Ascending aorta (tissue), 2 donors: ENCODE measurements at regions of chr15 and their contacts with region 1.

Region 1: GRCh38 chr15:101294731-101295606 is at the start of gene SNRPA1:
- DNase-seq: peak; percentile 87 to 99
- H3K4me3 ChIP-seq: peak within 1 kb of the TSS; percentile 65 to 100
- H3K27ac ChIP-seq: peak within 1 kb of the TSS; percentile 95 to 98
- H3K4me1 ChIP-seq: peaks cover 3 to 13% of the 10 kb centered on the region in 2 donors
- H3K27me3 ChIP-seq: no peaks in the 10 kb centered on the region
- CTCF ChIP-seq: no peak
- total RNA-seq, gene SNRPA1: 17.8 TPM

Region 2: GRCh38 chr15:101167753-101168463 is 127.1 kb before region 1 on chr15:
- intact Hi-C with region 1: loop called (anchors 1 kb)
- DNase-seq: peak; percentile 69 to 92
- H3K4me3 ChIP-seq: peak overlapping the region; percentile 13 to 37
- H3K27ac ChIP-seq: peak overlapping the region; percentile 94
- H3K4me1 ChIP-seq: peaks cover 23 to 36% of the 10 kb centered on the region in 2 donors
- H3K27me3 ChIP-seq: no peaks in the 10 kb centered on the region
- CTCF ChIP-seq: peak in 1 of 3 experiments; percentile 29

Region 3: GRCh38 chr15:101188637-101189408 is 106.1 kb before region 1 on chr15:
- intact Hi-C with region 1: no loop called
- DNase-seq: peak in 1 of 2 donors; percentile 69
- H3K4me3 ChIP-seq: peak overlapping the region; percentile 42 to 64
- H3K27ac ChIP-seq: peak overlapping the region; percentile 82 to 83
- H3K4me1 ChIP-seq: peaks cover 0 to 58% of the 10 kb centered on the region in 2 donors
- H3K27me3 ChIP-seq: no peaks in the 10 kb centered on the region
- CTCF ChIP-seq: no peak

Region 4: DNA sequence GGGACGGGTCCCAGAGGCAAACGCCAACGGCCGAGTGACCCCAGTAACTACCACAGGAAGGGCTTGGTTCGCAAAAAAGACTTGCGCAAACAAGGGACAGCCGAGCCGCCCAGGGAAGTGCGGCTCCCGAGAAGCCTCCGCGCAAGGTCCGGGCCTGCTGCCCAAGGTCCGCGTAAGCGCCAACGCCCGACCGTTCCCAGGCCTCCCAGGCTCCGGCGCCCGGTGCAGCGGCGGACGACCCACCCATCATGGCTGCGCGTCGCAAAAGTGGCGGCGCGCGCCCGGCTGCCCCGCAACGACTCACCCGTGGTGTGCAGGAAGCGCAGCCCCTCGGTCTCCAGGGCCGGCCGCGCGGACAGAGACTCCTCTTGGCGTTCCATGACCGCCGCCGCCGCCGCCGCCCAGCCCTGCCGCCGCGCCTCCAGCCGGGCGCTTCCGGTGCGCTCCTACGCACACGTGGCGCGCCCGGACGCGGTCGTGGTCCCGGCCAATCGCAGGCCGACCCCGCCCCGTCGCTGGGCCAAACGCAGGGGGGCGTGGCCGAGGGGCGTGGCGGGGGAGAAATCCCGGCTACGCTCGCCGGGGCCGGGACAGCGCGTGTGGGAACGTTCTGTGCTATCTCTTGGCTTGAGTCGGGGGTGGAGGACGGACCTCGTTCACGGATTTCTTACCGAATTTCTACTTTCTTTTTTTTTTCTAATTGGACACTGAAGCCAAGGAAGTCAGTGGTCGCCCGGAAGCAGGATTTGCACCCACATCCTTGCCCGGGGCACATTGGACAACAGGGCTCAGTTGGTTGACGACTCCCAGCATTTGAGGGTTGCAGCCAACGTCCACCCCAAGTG is 17.7 kb before region 1 on chr15 and contains the start of gene SELENOS:
- intact Hi-C with region 1: loop called (anchors 1 kb)
- DNase-seq: peak; percentile 52 to 93
- H3K4me3 ChIP-seq: peak within 1 kb of the TSS; percentile 67 to 90
- H3K27ac ChIP-seq: peak within 1 kb of the TSS; percentile 89 to 93
- H3K4me1 ChIP-seq: peaks cover 0 to 14% of the 10 kb centered on the region in 2 donors
- H3K27me3 ChIP-seq: no peaks in the 10 kb centered on the region
- CTCF ChIP-seq: no peak
- total RNA-seq, gene SELENOS: 32.0 TPM

Region 5: GRCh38 chr15:101652098-101652782 is 357.3 kb after region 1 on chr15 and contains the start of gene TM2D3:
- intact Hi-C with region 1: loop called (anchors 2 kb)
- DNase-seq: peak; percentile 63 to 95
- H3K4me3 ChIP-seq: peak within 1 kb of the TSS; percentile 97 to 98
- H3K27ac ChIP-seq: peak within 1 kb of the TSS; percentile 99 to 100
- H3K4me1 ChIP-seq: peaks cover 0 to 27% of the 10 kb centered on the region in 2 donors
- H3K27me3 ChIP-seq: no peaks in the 10 kb centered on the region
- CTCF ChIP-seq: peak; percentile 74 to 95 (median 84)
- total RNA-seq, gene TM2D3: 105 TPM

Region 6: DNA sequence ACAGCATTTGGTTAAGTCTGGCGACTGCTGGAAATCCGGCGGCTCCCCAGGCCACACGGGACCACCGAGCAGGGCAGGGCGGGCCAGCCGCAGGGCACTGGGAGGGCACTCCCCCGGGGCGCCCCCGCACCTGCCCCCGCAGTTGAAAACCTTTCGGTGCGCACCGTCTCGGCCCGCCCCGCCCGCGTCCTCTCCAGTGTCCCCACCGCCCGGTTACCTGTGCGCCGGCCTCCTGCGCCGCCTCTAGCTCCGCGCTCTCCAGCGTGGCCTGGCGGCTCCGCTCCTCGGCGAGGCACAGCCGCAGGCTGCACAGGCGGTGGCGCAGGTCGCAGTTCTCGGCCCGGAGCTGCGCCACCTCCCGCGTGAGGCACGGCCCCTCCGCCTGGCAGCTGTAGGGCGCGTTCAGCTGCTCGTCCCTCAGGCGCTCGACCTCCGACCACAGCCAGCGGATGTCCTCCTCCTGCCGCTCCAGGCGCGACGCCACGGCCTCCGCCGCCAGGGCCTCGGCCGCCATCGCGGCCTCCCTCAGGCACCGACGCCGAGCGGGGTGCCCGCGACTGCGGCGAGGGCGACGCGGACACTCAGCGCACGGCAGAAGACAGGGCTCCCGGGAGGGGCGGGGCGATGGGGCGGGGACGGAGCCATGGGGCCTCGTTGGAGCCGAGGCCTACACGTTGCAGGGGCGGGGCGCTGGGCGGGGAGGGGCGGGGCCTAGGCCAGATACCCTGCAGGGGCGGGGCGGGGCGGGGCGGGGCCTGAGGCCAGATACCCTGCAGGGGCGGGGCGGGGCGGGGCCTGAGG is 429.1 kb after region 1 on chr15 and contains the start of gene TARS3:
- intact Hi-C with region 1: loop called (anchors 5 kb)
- DNase-seq: peak; percentile 83 to 97
- H3K4me3 ChIP-seq: peak within 1 kb of the TSS; percentile 76 to 82
- H3K27ac ChIP-seq: peak within 1 kb of the TSS; percentile 91 to 92
- H3K4me1 ChIP-seq: peaks cover 0 to 7% of the 10 kb centered on the region in 2 donors
- H3K27me3 ChIP-seq: no peaks in the 10 kb centered on the region
- CTCF ChIP-seq: peak in 1 of 3 experiments; percentile 25
- total RNA-seq, gene TARS3: 39.5 TPM